ENCODE measurements at regions of chr18 and their contacts with region 1.

Region 1: GRCh38 chr18:21997207-21998143 is 171.9 kb upstream of the GATA6 start:
- DNase-seq: peak; percentile 31 to 72 (median 50)
- ATAC-seq: peak; percentile 87
- H3K4me3 ChIP-seq: no peak overlapping the region
- H3K27ac ChIP-seq: peak overlapping the region; percentile 62 to 78 (median 73)
- H3K4me1 ChIP-seq: peaks cover 48% of the 10 kb centered on the region
- H3K27me3 ChIP-seq: no peaks in the 10 kb centered on the region
- CTCF ChIP-seq: peak; percentile 64 to 96 (median 94)
- POLR2A ChIP-seq: peak in 1 of 3 donors; percentile 14

Region 2: GRCh38 chr18:22108674-22109073 is 111.2 kb after region 1 on chr18:
- intact Hi-C with region 1: no loop called
- DNase-seq: peak; percentile 41 to 58 (median 48)
- ATAC-seq: peak; percentile 36
- H3K4me3 ChIP-seq: no peak overlapping the region
- H3K27ac ChIP-seq: peak overlapping the region in 1 of 4 donors; percentile 14
- H3K4me1 ChIP-seq: peaks cover 35% of the 10 kb centered on the region
- H3K27me3 ChIP-seq: no peaks in the 10 kb centered on the region
- CTCF ChIP-seq: peak in 5 of 7 experiments; percentile 16 to 37 (median 31)
- POLR2A ChIP-seq: no peak

Region 3: GRCh38 chr18:22170421-22171262 is 173.2 kb after region 1 on chr18:
- intact Hi-C with region 1: loop called (anchors 10 kb)
- DNase-seq: peak; percentile 67 to 79 (median 72)
- ATAC-seq: no peak
- H3K4me3 ChIP-seq: peak overlapping the region; percentile 89 to 97
- H3K27ac ChIP-seq: peak overlapping the region; percentile 95 to 100 (median 98)
- H3K4me1 ChIP-seq: peaks cover 7% of the 10 kb centered on the region
- H3K27me3 ChIP-seq: no peaks in the 10 kb centered on the region
- CTCF ChIP-seq: no peak
- POLR2A ChIP-seq: peak in 1 of 3 donors; percentile 18

Region 4: DNA sequence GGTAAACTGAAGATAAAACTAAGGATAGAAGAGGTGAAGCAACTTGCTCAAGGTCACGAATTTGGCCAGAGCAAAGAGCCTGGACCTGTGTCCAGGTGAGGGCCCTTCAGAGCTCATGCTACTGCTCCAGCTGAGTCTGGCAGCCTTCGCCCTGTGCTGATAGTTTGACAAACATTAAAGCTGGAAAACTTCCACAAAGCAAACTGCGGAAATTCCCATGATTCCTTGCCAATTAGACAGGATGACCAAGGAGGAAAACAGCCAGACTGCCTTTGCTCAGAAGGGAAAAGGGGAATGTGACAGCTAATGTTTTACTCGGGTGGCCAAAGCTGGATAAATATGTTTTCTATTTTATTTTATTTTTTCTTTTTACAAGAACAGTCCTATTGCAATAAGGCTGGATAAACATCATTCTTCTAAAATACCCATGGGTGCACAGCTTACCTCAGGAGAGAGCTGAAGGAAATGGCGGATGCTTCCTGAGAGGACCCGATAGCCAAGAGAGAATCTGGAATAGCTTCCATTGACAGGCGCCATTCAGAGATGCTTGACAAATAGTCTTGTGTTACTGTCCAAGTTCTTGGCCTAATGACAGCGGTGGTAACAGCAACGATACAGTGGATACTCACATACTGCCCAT is 425.6 kb after region 1 on chr18:
- intact Hi-C with region 1: no loop called
- DNase-seq: peak; percentile 86 to 95 (median 94)
- ATAC-seq: peak; percentile 97
- H3K4me3 ChIP-seq: no peak overlapping the region
- H3K27ac ChIP-seq: peak overlapping the region; percentile 42 to 79 (median 66)
- H3K4me1 ChIP-seq: peaks cover 24% of the 10 kb centered on the region
- H3K27me3 ChIP-seq: no peaks in the 10 kb centered on the region
- CTCF ChIP-seq: no peak
- POLR2A ChIP-seq: no peak

Measured in body of pancreas (tissue), 4 donors.